Naive thymus-derived CD4-positive, alpha-beta T cell (primary cell): ENCODE measurements at regions of chr9 and their contacts with region 1.

Region 1: GRCh38 chr9:99057665-99058625 is 47.0 kb upstream of the TGFBR1 start:
- DNase-seq: peak; percentile 16 to 86 (median 82)
- ATAC-seq: peak; percentile 74
- H3K4me3 ChIP-seq: peak overlapping the region; percentile 56
- H3K4me3 Mint-ChIP-seq: peak overlapping the region; percentile 79 to 92 (median 89)
- H3K27ac ChIP-seq: peak overlapping the region; percentile 25
- H3K27ac Mint-ChIP-seq: peak overlapping the region; percentile 21 to 95 (median 75)
- H3K4me1 ChIP-seq: peaks cover 62 to 76% of the 10 kb centered on the region in 2 donors
- H3K4me1 Mint-ChIP-seq: peaks cover 62 to 90% (median 78%) of the 10 kb centered on the region in 7 donors
- H3K27me3 ChIP-seq: no peaks in the 10 kb centered on the region
- H3K27me3 Mint-ChIP-seq: peaks cover 0 to 8% (median 0%) of the 10 kb centered on the region in 5 donors

Region 2: GRCh38 chr9:98231770-98232478 is 826.0 kb before region 1 on chr9:
- CTCF ChIA-PET with region 1: no interaction called
- POLR2A ChIA-PET with region 1: no interaction called
- intact Hi-C with region 1: no loop called
- DNase-seq: no peak
- ATAC-seq: no peak
- H3K4me3 ChIP-seq: no peak overlapping the region
- H3K4me3 Mint-ChIP-seq: no peak overlapping the region
- H3K27ac ChIP-seq: no peak overlapping the region
- H3K27ac Mint-ChIP-seq: peak overlapping the region in 1 of 9 donors; percentile 31
- H3K4me1 ChIP-seq: no peaks in the 10 kb centered on the region
- H3K4me1 Mint-ChIP-seq: no peaks in the 10 kb centered on the region
- H3K27me3 ChIP-seq: no peaks in the 10 kb centered on the region
- H3K27me3 Mint-ChIP-seq: no peaks in the 10 kb centered on the region

Region 3: DNA sequence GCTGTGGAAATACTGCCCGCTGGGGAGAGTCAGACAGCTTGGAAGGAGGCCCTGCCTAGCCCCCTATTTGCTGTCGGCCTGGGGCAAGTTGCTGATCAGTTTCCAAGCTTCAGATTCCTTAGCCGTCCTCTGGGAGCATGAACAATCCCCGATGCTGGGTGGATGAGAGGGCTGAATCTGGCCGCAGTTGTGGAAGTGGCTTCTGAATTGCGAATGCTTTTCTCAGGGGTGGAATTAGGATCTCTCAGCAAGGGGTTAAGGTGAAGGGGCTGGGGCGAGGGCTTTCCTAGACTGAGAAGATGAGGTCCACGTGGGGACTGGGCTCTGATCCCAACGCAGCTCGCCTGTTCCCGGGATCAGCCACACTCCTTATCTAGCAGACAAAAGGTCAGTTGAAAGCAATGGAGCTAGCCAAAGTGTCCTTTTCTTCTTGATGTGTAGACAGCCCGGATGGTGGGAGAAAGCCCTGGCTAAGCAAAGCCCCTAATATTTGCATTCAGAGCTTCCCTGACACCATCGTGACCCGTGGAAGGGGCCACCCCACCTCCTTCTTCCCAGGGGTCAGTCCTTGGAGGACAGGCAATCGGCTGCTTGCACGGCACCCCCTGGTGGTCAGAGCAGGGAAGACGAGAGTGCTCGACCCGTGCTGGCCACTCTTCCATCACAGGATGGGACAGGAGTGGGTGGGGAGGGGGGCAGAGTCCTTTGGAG is 59.3 kb before region 1 on chr9:
- CTCF ChIA-PET with region 1: interaction called, 4 read pairs
- POLR2A ChIA-PET with region 1: interaction called, 3 read pairs
- intact Hi-C with region 1: loop called (anchors 1 to 2 kb)
- DNase-seq: peak in 8 of 9 donors; percentile 9 to 73 (median 29)
- ATAC-seq: peak; percentile 75
- H3K4me3 ChIP-seq: no peak overlapping the region
- H3K4me3 Mint-ChIP-seq: no peak overlapping the region
- H3K27ac ChIP-seq: no peak overlapping the region
- H3K27ac Mint-ChIP-seq: no peak overlapping the region
- H3K4me1 ChIP-seq: peaks cover 4 to 14% of the 10 kb centered on the region in 2 donors
- H3K4me1 Mint-ChIP-seq: peaks cover 17 to 45% (median 21%) of the 10 kb centered on the region in 7 donors
- H3K27me3 ChIP-seq: no peaks in the 10 kb centered on the region
- H3K27me3 Mint-ChIP-seq: peaks cover 0 to 32% (median 0%) of the 10 kb centered on the region in 5 donors

Region 4: GRCh38 chr9:99069075-99069474 is 11.1 kb after region 1 on chr9:
- CTCF ChIA-PET with region 1: interaction called, 6 read pairs
- POLR2A ChIA-PET with region 1: interaction called, 8 read pairs
- intact Hi-C with region 1: loop called in 1 of 2 experiments (anchors 1 kb)
- DNase-seq: no peak
- ATAC-seq: no peak
- H3K4me3 ChIP-seq: no peak overlapping the region
- H3K4me3 Mint-ChIP-seq: peak overlapping the region in 8 of 10 donors; percentile 34 to 59 (median 48)
- H3K27ac ChIP-seq: no peak overlapping the region
- H3K27ac Mint-ChIP-seq: peak overlapping the region; percentile 53 to 91 (median 82)
- H3K4me1 ChIP-seq: peaks cover 13 to 27% of the 10 kb centered on the region in 2 donors
- H3K4me1 Mint-ChIP-seq: peaks cover 23 to 83% (median 65%) of the 10 kb centered on the region in 7 donors
- H3K27me3 ChIP-seq: no peaks in the 10 kb centered on the region
- H3K27me3 Mint-ChIP-seq: no peaks in the 10 kb centered on the region

Region 5: DNA sequence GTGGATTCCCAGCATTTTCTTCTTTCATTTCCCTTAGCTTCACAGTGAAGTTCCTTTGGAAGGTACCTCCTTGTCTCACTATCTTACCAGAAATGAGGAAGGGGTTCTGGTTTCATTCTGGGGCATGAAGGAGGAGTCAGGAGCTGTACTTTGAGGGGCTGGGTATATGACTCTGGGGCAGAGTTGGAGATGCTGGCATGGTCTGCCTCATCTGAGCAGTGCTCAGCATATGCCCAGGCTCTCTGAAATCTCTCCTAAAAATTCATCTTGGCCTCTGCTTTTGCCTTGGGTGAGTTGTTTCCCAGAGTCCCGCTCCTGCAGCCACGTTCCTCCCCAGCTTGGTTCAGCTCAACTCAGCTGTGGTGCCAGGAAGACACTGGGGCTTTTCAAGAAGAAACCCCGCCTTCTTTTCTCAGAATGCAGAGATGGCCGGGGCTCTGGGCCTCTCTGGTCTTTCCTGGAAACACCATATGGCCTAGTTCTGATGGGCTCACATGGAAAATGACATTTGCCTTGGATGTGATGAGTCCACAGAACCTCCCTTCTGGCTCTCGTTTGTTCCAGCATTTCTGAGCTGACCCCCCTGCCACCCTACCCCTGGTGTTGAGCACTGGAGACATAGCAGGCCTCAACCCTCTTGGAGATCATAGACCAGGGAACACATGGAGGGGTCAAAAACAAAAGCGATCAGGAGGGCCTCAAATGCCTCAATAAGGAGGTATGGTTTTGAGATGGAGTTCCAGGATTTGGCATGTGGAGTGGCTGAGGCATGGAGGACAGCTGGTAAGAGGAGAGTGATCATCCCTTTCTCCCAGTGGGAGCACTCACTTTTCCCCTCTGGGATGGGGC is 34.9 kb after region 1 on chr9:
- CTCF ChIA-PET with region 1: no interaction called
- POLR2A ChIA-PET with region 1: interaction called, 5 read pairs
- intact Hi-C with region 1: loop called in 1 of 2 experiments (anchors 1 kb)
- DNase-seq: peak in 1 of 9 donors; percentile 41
- ATAC-seq: peak; percentile 44
- H3K4me3 ChIP-seq: no peak overlapping the region
- H3K4me3 Mint-ChIP-seq: peak overlapping the region in 9 of 10 donors; percentile 11 to 72 (median 61)
- H3K27ac ChIP-seq: no peak overlapping the region
- H3K27ac Mint-ChIP-seq: peak overlapping the region in 6 of 9 donors; percentile 8 to 94 (median 62)
- H3K4me1 ChIP-seq: peaks cover 15 to 22% of the 10 kb centered on the region in 2 donors
- H3K4me1 Mint-ChIP-seq: peaks cover 28 to 74% (median 42%) of the 10 kb centered on the region in 7 donors
- H3K27me3 ChIP-seq: no peaks in the 10 kb centered on the region
- H3K27me3 Mint-ChIP-seq: no peaks in the 10 kb centered on the region

Region 6: GRCh38 chr9:99112750-99113413 is 54.9 kb after region 1 on chr9:
- CTCF ChIA-PET with region 1: interaction called, 3 read pairs
- POLR2A ChIA-PET with region 1: interaction called, 17 read pairs
- intact Hi-C with region 1: loop called (anchors 1 to 2 kb)
- DNase-seq: peak in 7 of 9 donors; percentile 73 to 88 (median 83)
- ATAC-seq: peak; percentile 97
- H3K4me3 ChIP-seq: peak overlapping the region; percentile 15
- H3K4me3 Mint-ChIP-seq: peak overlapping the region; percentile 62 to 83 (median 78)
- H3K27ac ChIP-seq: peak overlapping the region; percentile 34
- H3K27ac Mint-ChIP-seq: peak overlapping the region; percentile 65 to 90 (median 82)
- H3K4me1 ChIP-seq: peaks cover 81 to 82% of the 10 kb centered on the region in 2 donors
- H3K4me1 Mint-ChIP-seq: peaks cover 66 to 97% (median 93%) of the 10 kb centered on the region in 7 donors
- H3K27me3 ChIP-seq: no peaks in the 10 kb centered on the region
- H3K27me3 Mint-ChIP-seq: no peaks in the 10 kb centered on the region

Region 7: GRCh38 chr9:99134893-99135341 is 77.0 kb after region 1 on chr9:
- CTCF ChIA-PET with region 1: interaction called, 8 read pairs
- POLR2A ChIA-PET with region 1: interaction called, 14 read pairs
- intact Hi-C with region 1: loop called in 1 of 2 experiments (anchors 1 kb)
- DNase-seq: peak in 7 of 9 donors; percentile 32 to 54 (median 42)
- ATAC-seq: peak; percentile 67
- H3K4me3 ChIP-seq: peak overlapping the region; percentile 32
- H3K4me3 Mint-ChIP-seq: peak overlapping the region; percentile 61 to 82 (median 74)
- H3K27ac ChIP-seq: peak overlapping the region; percentile 50
- H3K27ac Mint-ChIP-seq: peak overlapping the region; percentile 72 to 96 (median 89)
- H3K4me1 ChIP-seq: peaks cover 21 to 53% of the 10 kb centered on the region in 2 donors
- H3K4me1 Mint-ChIP-seq: peaks cover 48 to 95% (median 90%) of the 10 kb centered on the region in 7 donors
- H3K27me3 ChIP-seq: no peaks in the 10 kb centered on the region
- H3K27me3 Mint-ChIP-seq: no peaks in the 10 kb centered on the region